HCT116 (cell line): ENCODE measurements at regions of chr10 and their contacts with region 1.

Region 1: GRCh38 chr10:80253266-80254245 is 35.9 kb downstream of the MAT1A start:
- DNase-seq: no peak
- ATAC-seq: no peak
- H3K4me3 ChIP-seq: no peak overlapping the region
- H3K27ac ChIP-seq: no peak overlapping the region
- H3K4me1 ChIP-seq: peaks cover 3 to 8% of the 10 kb centered on the region in 2 experiments
- H3K27me3 ChIP-seq: no peaks in the 10 kb centered on the region
- CTCF ChIP-seq: no peak
- POLR2A ChIP-seq: no peak
- RAD21 ChIP-seq: no peak

Region 2: GRCh38 chr10:80055760-80056159 is 197.8 kb before region 1 on chr10:
- CTCF ChIA-PET with region 1: no interaction called
- POLR2A ChIA-PET with region 1: no interaction called
- RAD21 ChIA-PET with region 1: no interaction called
- intact Hi-C with region 1: loop called (anchors 10 kb)
- DNase-seq: no peak
- ATAC-seq: no peak
- H3K4me3 ChIP-seq: no peak overlapping the region
- H3K27ac ChIP-seq: no peak overlapping the region
- H3K4me1 ChIP-seq: no peaks in the 10 kb centered on the region; a peak in 1 of 4 replicates
- H3K27me3 ChIP-seq: no peaks in the 10 kb centered on the region
- CTCF ChIP-seq: no peak
- POLR2A ChIP-seq: no peak
- RAD21 ChIP-seq: no peak

Region 3: GRCh38 chr10:80498833-80499741 is 245.5 kb after region 1 on chr10:
- CTCF ChIA-PET with region 1: no interaction called
- POLR2A ChIA-PET with region 1: no interaction called
- RAD21 ChIA-PET with region 1: no interaction called
- intact Hi-C with region 1: loop called (anchors 10 kb)
- DNase-seq: peak; percentile 85
- ATAC-seq: peak; percentile 85
- H3K4me3 ChIP-seq: peak overlapping the region in 1 of 2 experiments; percentile 27; a peak in 2 of 4 replicates
- H3K27ac ChIP-seq: peak overlapping the region; percentile 95
- H3K4me1 ChIP-seq: peaks cover 90 to 95% of the 10 kb centered on the region in 2 experiments
- H3K27me3 ChIP-seq: no peaks in the 10 kb centered on the region
- CTCF ChIP-seq: 0 out of 6 replicates have a peak, but pooled peaks of 1 of the 3 experiments have one; percentile 4
- POLR2A ChIP-seq: no peak
- RAD21 ChIP-seq: no peak

Region 4: DNA sequence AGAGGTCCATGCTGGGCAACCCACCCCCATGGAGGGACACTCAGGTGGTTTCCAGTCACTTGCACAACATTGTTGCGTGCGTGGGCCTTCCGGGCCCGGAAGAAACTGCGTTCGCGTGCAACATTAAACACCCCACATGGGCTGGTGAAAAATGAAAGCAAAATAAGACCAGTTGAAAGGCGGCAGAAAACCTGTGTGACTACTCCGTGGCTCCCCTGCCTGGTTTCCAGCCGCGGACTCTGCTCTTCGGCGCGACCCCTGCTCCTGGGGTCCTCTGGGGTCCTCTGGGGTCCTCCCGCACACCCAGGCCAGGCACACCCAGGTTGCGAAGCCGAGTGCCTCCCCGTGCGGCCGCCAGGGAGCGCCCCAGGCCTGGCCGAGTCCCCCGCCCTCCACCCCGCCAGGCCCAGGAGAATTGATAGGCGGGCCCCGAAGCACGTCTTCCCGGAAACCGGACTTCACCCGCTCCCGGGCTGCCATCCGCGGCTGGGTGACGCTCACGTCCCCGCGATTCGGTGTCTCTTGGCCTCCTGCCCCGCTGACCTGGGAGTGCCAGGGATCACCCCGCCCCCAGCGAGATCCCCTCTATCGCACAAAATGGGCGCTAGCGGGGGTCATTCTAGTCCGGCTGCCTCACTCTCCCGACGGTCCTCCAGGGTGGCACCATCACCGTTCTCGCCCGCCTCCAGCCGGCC is 282.3 kb after region 1 on chr10:
- CTCF ChIA-PET with region 1: no interaction called
- POLR2A ChIA-PET with region 1: no interaction called
- RAD21 ChIA-PET with region 1: no interaction called
- intact Hi-C with region 1: loop called (anchors 10 kb)
- DNase-seq: peak; percentile 48
- ATAC-seq: peak; percentile 96
- H3K4me3 ChIP-seq: peak overlapping the region; percentile 73 to 83
- H3K27ac ChIP-seq: peak overlapping the region; percentile 74
- H3K4me1 ChIP-seq: peaks cover 3 to 19% of the 10 kb centered on the region in 2 experiments; a peak in 2 of 4 replicates
- H3K27me3 ChIP-seq: no peaks in the 10 kb centered on the region
- CTCF ChIP-seq: peak; percentile 62 to 87 (median 77)
- POLR2A ChIP-seq: peak; percentile 38
- RAD21 ChIP-seq: peak; percentile 69